Left colon (tissue), 2 donors: ENCODE measurements at regions of chr1 and their contacts with region 1.

Region 1: GRCh38 chr1:40774266-40774998 is 9.2 kb upstream of the KCNQ4 start:
- DNase-seq: peak; percentile 44 to 81
- ATAC-seq: peak; percentile 79

Region 2: GRCh38 chr1:39926343-39926793 is 848.1 kb before region 1 on chr1:
- intact Hi-C with region 1: no loop called
- DNase-seq: no peak
- ATAC-seq: peak; percentile 5

Region 3: GRCh38 chr1:40849801-40850592 is 75.6 kb after region 1 on chr1:
- intact Hi-C with region 1: loop called (anchors 2 to 10 kb)
- DNase-seq: peak in 1 of 2 donors; percentile 72
- ATAC-seq: peak; percentile 83